Naive thymus-derived CD4-positive, alpha-beta T cell (primary cell): ENCODE measurements at regions of chr13 and their contacts with region 1.

Region 1: DNA sequence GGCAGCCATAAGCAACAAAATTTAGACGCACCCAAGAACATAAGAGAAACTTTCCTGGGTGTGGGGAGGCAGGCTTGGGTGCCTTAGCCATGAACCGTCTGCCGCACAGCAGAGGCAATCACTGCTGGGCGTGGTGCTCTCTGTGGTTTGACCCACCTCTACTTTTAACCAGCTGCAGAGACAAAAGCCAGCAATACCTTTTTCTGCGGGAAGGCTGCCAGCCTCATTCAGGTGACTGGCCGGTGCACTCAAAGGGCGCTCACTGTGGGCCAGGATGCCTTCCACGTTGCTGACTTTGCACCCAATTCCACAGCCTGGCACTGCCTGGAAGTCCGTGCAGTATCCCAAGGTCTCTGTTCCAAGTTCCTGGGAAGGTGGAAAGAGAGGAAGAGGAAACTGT is 69.1 kb downstream of the ATP7B start:
- DNase-seq: peak in 7 of 9 donors; percentile 34 to 63 (median 57)
- ATAC-seq: peak; percentile 83
- H3K4me3 ChIP-seq: peak overlapping the region; percentile 52
- H3K4me3 Mint-ChIP-seq: peak overlapping the region; percentile 70 to 94 (median 88)
- H3K27ac ChIP-seq: peak overlapping the region; percentile 50
- H3K27ac Mint-ChIP-seq: peak overlapping the region; percentile 58 to 95 (median 84)
- H3K4me1 ChIP-seq: peaks cover 6 to 40% of the 10 kb centered on the region in 2 donors
- H3K4me1 Mint-ChIP-seq: peaks cover 33 to 64% (median 58%) of the 10 kb centered on the region in 7 donors
- H3K27me3 ChIP-seq: no peaks in the 10 kb centered on the region
- H3K27me3 Mint-ChIP-seq: peaks cover 0 to 34% (median 0%) of the 10 kb centered on the region in 5 donors

Region 2: DNA sequence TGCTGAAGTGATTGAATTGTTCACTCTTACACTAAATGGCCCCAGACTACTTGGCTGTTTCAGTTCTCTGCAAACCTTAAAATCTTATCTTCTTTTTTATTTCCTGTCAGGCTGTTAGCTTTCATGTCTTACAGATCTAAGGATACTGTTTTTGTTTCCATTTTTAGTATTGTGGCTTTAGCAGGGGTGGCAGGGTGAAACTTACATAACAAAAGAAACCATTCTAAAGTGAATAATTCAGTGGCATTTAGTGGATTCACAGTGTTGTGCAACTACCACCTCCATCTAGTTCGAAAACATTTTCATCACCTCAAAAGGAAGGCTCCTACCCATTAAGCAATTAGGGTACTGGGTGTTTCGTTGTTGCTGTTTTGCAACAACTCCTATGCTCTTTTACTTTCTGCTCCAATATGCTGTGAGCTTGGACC is 117.0 kb before region 1 on chr13:
- CTCF ChIA-PET with region 1: no interaction called
- POLR2A ChIA-PET with region 1: no interaction called
- intact Hi-C with region 1: loop called in 1 of 2 experiments (anchors 2 kb)
- DNase-seq: peak in 7 of 9 donors; percentile 62 to 90 (median 84)
- ATAC-seq: peak; percentile 81
- H3K4me3 ChIP-seq: peak overlapping the region; percentile 75
- H3K4me3 Mint-ChIP-seq: peak overlapping the region; percentile 62 to 100 (median 97)
- H3K27ac ChIP-seq: peak overlapping the region; percentile 85
- H3K27ac Mint-ChIP-seq: peak overlapping the region; percentile 86 to 99 (median 95)
- H3K4me1 ChIP-seq: peaks cover 61 to 78% of the 10 kb centered on the region in 2 donors
- H3K4me1 Mint-ChIP-seq: peaks cover 57 to 80% (median 63%) of the 10 kb centered on the region in 7 donors
- H3K27me3 ChIP-seq: no peaks in the 10 kb centered on the region
- H3K27me3 Mint-ChIP-seq: peaks cover 0 to 10% (median 0%) of the 10 kb centered on the region in 5 donors

Region 3: GRCh38 chr13:51895906-51896888 is 46.0 kb before region 1 on chr13:
- CTCF ChIA-PET with region 1: interaction called, 4 read pairs
- POLR2A ChIA-PET with region 1: no interaction called
- intact Hi-C with region 1: loop called in 1 of 2 experiments (anchors 1 kb)
- DNase-seq: peak in 8 of 9 donors; percentile 16 to 55 (median 40)
- ATAC-seq: peak; percentile 73
- H3K4me3 ChIP-seq: no peak overlapping the region
- H3K4me3 Mint-ChIP-seq: no peak overlapping the region
- H3K27ac ChIP-seq: no peak overlapping the region
- H3K27ac Mint-ChIP-seq: peak overlapping the region in 2 of 9 donors; percentile 22 to 42
- H3K4me1 ChIP-seq: no peaks in the 10 kb centered on the region
- H3K4me1 Mint-ChIP-seq: peaks cover 0 to 8% (median 0%) of the 10 kb centered on the region in 7 donors
- H3K27me3 ChIP-seq: no peaks in the 10 kb centered on the region
- H3K27me3 Mint-ChIP-seq: peaks cover 7 to 26% (median 11%) of the 10 kb centered on the region in 5 donors

Region 4: GRCh38 chr13:51955281-51955771 is 13.1 kb after region 1 on chr13:
- CTCF ChIA-PET with region 1: interaction called, 3 read pairs
- POLR2A ChIA-PET with region 1: interaction called, 15 read pairs
- intact Hi-C with region 1: loop called in 1 of 2 experiments (anchors 1 kb)
- DNase-seq: no peak
- ATAC-seq: no peak
- H3K4me3 ChIP-seq: no peak overlapping the region
- H3K4me3 Mint-ChIP-seq: no peak overlapping the region
- H3K27ac ChIP-seq: no peak overlapping the region
- H3K27ac Mint-ChIP-seq: no peak overlapping the region
- H3K4me1 ChIP-seq: peaks cover 3 to 34% of the 10 kb centered on the region in 2 donors
- H3K4me1 Mint-ChIP-seq: peaks cover 30 to 58% (median 51%) of the 10 kb centered on the region in 7 donors
- H3K27me3 ChIP-seq: no peaks in the 10 kb centered on the region
- H3K27me3 Mint-ChIP-seq: peaks cover 0 to 8% (median 0%) of the 10 kb centered on the region in 5 donors

Region 5: DNA sequence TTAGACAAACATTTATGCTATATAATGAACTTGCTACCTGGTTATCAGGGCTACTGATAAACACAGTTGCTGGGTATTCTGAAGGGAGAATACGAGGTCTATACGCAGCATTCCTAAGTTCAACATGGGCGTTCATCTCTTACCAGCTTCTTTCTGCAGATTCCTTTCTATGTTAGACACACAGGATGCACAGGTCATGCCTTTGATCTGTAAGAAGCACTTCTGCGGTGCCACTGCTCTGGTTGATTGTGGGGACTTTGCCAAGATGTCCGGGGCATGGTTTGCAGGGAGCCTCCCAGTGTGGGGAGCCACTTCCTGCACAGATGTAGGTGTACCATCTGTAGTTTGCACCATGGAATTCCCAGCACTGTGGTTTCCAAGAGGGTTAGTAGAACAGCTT is 28.2 kb after region 1 on chr13:
- CTCF ChIA-PET with region 1: no interaction called
- POLR2A ChIA-PET with region 1: interaction called, 4 read pairs
- intact Hi-C with region 1: loop called in 1 of 2 experiments (anchors 1 kb)
- DNase-seq: peak in 6 of 9 donors; percentile 21 to 40 (median 31)
- ATAC-seq: peak; percentile 56
- H3K4me3 ChIP-seq: no peak overlapping the region
- H3K4me3 Mint-ChIP-seq: peak overlapping the region in 8 of 10 donors; percentile 45 to 75 (median 62)
- H3K27ac ChIP-seq: no peak overlapping the region
- H3K27ac Mint-ChIP-seq: peak overlapping the region in 5 of 9 donors; percentile 14 to 86 (median 53)
- H3K4me1 ChIP-seq: peaks cover 8 to 31% of the 10 kb centered on the region in 2 donors
- H3K4me1 Mint-ChIP-seq: peaks cover 13 to 51% (median 44%) of the 10 kb centered on the region in 7 donors
- H3K27me3 ChIP-seq: no peaks in the 10 kb centered on the region
- H3K27me3 Mint-ChIP-seq: no peaks in the 10 kb centered on the region